ENCODE measurements at regions of chr12 and their contacts with region 1.

Region 1: GRCh38 chr12:103503977-103504376 is 8.2 kb upstream of the C12orf42 start:
- DNase-seq: peak; percentile 35 to 75 (median 59)
- H3K4me3 ChIP-seq: no peak overlapping the region
- H3K4me3 Mint-ChIP-seq: no peak overlapping the region
- H3K27ac ChIP-seq: no peak overlapping the region
- H3K27ac Mint-ChIP-seq: peak overlapping the region in 2 of 8 donors; percentile 28 to 55
- H3K4me1 ChIP-seq: no peaks in the 10 kb centered on the region
- H3K4me1 Mint-ChIP-seq: peaks cover 0 to 9% (median 4%) of the 10 kb centered on the region in 3 donors
- H3K27me3 ChIP-seq: no peaks in the 10 kb centered on the region
- H3K27me3 Mint-ChIP-seq: no peaks in the 10 kb centered on the region

Region 2: GRCh38 chr12:102948941-102949352 is 555.0 kb before region 1 on chr12:
- CTCF ChIA-PET with region 1: interaction called, 24 read pairs
- POLR2A ChIA-PET with region 1: no interaction called
- DNase-seq: peak; percentile 11 to 58 (median 38)
- H3K4me3 ChIP-seq: no peak overlapping the region
- H3K4me3 Mint-ChIP-seq: no peak overlapping the region
- H3K27ac ChIP-seq: no peak overlapping the region
- H3K27ac Mint-ChIP-seq: no peak overlapping the region
- H3K4me1 ChIP-seq: no peaks in the 10 kb centered on the region
- H3K4me1 Mint-ChIP-seq: peaks cover 0 to 8% (median 1%) of the 10 kb centered on the region in 3 donors
- H3K27me3 ChIP-seq: peaks cover 10% of the 10 kb centered on the region
- H3K27me3 Mint-ChIP-seq: peaks cover 16 to 53% of the 10 kb centered on the region in 2 donors

Region 3: GRCh38 chr12:103530307-103531066 is 26.5 kb after region 1 on chr12:
- CTCF ChIA-PET with region 1: no interaction called
- POLR2A ChIA-PET with region 1: no interaction called
- DNase-seq: no peak
- H3K4me3 ChIP-seq: no peak overlapping the region
- H3K4me3 Mint-ChIP-seq: peak overlapping the region in 2 of 7 donors; percentile 49 to 59
- H3K27ac ChIP-seq: no peak overlapping the region
- H3K27ac Mint-ChIP-seq: no peak overlapping the region
- H3K4me1 ChIP-seq: no peaks in the 10 kb centered on the region
- H3K4me1 Mint-ChIP-seq: peaks cover 0 to 15% (median 12%) of the 10 kb centered on the region in 3 donors
- H3K27me3 ChIP-seq: no peaks in the 10 kb centered on the region
- H3K27me3 Mint-ChIP-seq: peaks cover 11 to 21% of the 10 kb centered on the region in 2 donors

Region 4: GRCh38 chr12:103586132-103586531 is 82.2 kb after region 1 on chr12:
- CTCF ChIA-PET with region 1: no interaction called
- POLR2A ChIA-PET with region 1: no interaction called
- DNase-seq: no peak
- H3K4me3 ChIP-seq: no peak overlapping the region
- H3K4me3 Mint-ChIP-seq: no peak overlapping the region
- H3K27ac ChIP-seq: no peak overlapping the region
- H3K27ac Mint-ChIP-seq: no peak overlapping the region
- H3K4me1 ChIP-seq: no peaks in the 10 kb centered on the region
- H3K4me1 Mint-ChIP-seq: no peaks in the 10 kb centered on the region
- H3K27me3 ChIP-seq: no peaks in the 10 kb centered on the region
- H3K27me3 Mint-ChIP-seq: peaks cover 2 to 24% of the 10 kb centered on the region in 2 donors

Measured in CD8-positive, alpha-beta memory T cell (primary cell).